ENCODE measurements at regions of chr15 and their contacts with region 1.

Region 1: GRCh38 chr15:63276342-63277037 is 915 bp upstream of the APH1B start:
- DNase-seq: no peak
- ATAC-seq: no peak
- H3K4me3 Mint-ChIP-seq: peak overlapping the region; percentile 83
- H3K27ac Mint-ChIP-seq: peak overlapping the region; percentile 88
- H3K4me1 Mint-ChIP-seq: peaks cover 39% of the 10 kb centered on the region
- H3K27me3 Mint-ChIP-seq: no peaks in the 10 kb centered on the region

Region 2: GRCh38 chr15:63195569-63196015 is 80.9 kb before region 1 on chr15:
- CTCF ChIA-PET with region 1: interaction called, 3 read pairs
- POLR2A ChIA-PET with region 1: interaction called, 10 read pairs
- DNase-seq: no peak
- ATAC-seq: no peak
- H3K4me3 Mint-ChIP-seq: peak overlapping the region; percentile 51
- H3K27ac Mint-ChIP-seq: peak overlapping the region; percentile 85
- H3K4me1 Mint-ChIP-seq: peaks cover 90% of the 10 kb centered on the region
- H3K27me3 Mint-ChIP-seq: no peaks in the 10 kb centered on the region

Region 3: GRCh38 chr15:63322541-63322940 is 46.1 kb after region 1 on chr15:
- CTCF ChIA-PET with region 1: no interaction called
- POLR2A ChIA-PET with region 1: no interaction called
- DNase-seq: no peak
- ATAC-seq: no peak
- H3K4me3 Mint-ChIP-seq: no peak overlapping the region
- H3K27ac Mint-ChIP-seq: no peak overlapping the region
- H3K4me1 Mint-ChIP-seq: no peaks in the 10 kb centered on the region
- H3K27me3 Mint-ChIP-seq: no peaks in the 10 kb centered on the region

Measured in activated CD8-positive, alpha-beta T cell treated with anti-CD3 and anti-CD28 coated beads, Interleukin-2, amount 10 ng/mL, durations not matched to agents 7 days and 5 days (primary cell).